ENCODE measurements at regions of chr13 and their contacts with region 1.

Region 1: GRCh38 chr13:60267498-60268198 is 103.9 kb upstream of the DIAPH3 start:
- DNase-seq: no peak

Region 2: DNA sequence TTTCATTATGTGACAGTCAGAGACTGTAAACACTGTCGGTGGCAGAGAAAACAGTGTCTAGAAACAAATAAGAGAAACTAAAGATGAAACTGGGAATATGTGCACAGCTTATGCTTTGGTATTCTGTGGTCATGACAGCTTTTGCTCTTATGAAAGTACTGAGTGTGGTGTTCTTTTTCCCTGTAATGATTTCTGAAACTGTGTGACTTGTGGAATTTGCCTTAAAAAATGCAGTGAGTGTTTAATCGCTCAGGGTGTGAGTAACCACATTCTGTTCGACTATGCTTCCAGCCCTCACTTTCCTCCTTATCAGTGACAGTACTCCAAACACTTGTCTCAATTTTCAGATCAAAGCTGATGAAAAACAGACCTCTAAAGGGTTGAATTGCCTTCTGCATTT is 37.1 kb before region 1 on chr13:
- intact Hi-C with region 1: loop called in 1 of 2 experiments (anchors 1 kb)
- DNase-seq: no peak

Region 3: DNA sequence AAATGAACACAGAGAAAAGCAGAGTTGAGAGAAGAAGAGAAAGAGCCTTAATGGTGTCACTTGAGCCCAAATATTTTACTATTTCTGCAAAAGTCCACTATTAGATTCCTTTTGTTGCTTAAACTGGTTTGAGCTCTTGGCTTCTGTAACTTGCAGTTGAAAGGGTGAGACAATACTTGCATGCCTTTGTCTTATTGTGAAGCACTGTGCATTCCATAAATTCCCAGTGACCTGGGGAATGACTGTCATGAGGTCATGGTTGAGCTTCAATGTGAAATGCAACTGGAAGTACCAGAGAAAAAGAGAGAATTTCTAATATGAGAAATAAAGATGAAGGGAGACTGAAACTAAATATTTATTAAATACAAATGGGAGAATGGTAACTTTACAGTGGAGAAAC is 440.2 kb after region 1 on chr13:
- intact Hi-C with region 1: no loop called
- DNase-seq: no peak

Measured in posterior vena cava (tissue), 2 donors.